ENCODE measurements at regions of chr4 and their contacts with region 1.

Region 1: GRCh38 chr4:8468746-8469535 is 28.4 kb downstream of the TRMT44 start:
- DNase-seq: peak; percentile 46 to 72
- H3K4me3 ChIP-seq: no peak overlapping the region
- H3K27ac ChIP-seq: no peak overlapping the region
- H3K4me1 ChIP-seq: peaks cover 15% of the 10 kb centered on the region; the same call in 1 of the 2 replicates
- H3K27me3 ChIP-seq: no peaks in the 10 kb centered on the region
- CTCF ChIP-seq: peak; percentile 89

Region 2: GRCh38 chr4:7929118-7929951 is 539.6 kb before region 1 on chr4:
- CTCF ChIA-PET with region 1: no interaction called
- POLR2A ChIA-PET with region 1: no interaction called
- intact Hi-C with region 1: no loop called
- DNase-seq: peak; percentile 77 to 82
- H3K4me3 ChIP-seq: no peak overlapping the region
- H3K27ac ChIP-seq: no peak overlapping the region
- H3K4me1 ChIP-seq: peaks cover 31% of the 10 kb centered on the region
- H3K27me3 ChIP-seq: no peaks in the 10 kb centered on the region
- CTCF ChIP-seq: 0 out of 2 replicates have a peak, but pooled peaks have one; percentile 22

Region 3: DNA sequence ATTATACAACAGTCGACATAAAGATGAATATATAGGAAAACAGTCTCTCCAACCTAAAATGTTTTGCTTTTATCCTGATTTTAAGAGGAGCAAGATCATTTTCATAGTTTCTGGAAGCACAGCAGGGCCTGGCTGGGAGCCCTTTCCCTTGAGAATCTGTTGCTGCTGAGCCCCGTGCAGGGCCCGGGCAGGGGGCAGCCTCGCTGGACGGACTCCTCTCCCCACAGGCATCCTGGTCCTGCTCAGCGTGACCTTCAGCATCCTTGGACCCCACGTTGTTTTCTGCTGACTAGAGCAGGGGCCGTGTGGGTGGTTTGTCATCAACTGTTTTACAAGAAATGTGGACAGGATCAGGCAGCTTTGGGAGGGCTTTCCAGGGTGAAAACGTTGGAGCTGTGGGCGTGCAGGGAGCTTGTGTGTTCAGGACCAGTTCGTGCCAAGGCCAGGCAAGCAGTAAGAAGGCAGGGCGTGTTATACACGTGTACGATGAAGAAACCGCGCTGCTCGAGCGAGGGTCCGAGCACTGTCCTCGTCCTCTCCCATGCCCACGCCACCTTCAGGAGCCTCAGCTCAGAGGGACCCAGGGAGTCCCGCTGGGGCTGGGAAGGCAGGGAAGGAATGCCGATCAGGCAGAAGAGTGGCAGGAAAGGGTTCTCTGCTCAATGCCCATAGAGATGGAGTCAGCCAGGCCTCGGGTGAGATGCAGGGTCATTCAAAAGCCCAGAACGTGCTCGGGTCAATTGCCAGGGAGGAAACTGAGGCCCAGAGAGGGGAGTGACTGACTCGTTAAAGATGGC is 148.7 kb after region 1 on chr4:
- CTCF ChIA-PET with region 1: interaction called, 10 read pairs
- POLR2A ChIA-PET with region 1: no interaction called
- intact Hi-C with region 1: no loop called
- DNase-seq: no peak
- H3K4me3 ChIP-seq: no peak overlapping the region
- H3K27ac ChIP-seq: no peak overlapping the region
- H3K4me1 ChIP-seq: no peaks in the 10 kb centered on the region
- H3K27me3 ChIP-seq: no peaks in the 10 kb centered on the region
- CTCF ChIP-seq: no peak